SK-N-SH (cell line): ENCODE measurements at regions of chrX and their contacts with region 1.

Region 1: DNA sequence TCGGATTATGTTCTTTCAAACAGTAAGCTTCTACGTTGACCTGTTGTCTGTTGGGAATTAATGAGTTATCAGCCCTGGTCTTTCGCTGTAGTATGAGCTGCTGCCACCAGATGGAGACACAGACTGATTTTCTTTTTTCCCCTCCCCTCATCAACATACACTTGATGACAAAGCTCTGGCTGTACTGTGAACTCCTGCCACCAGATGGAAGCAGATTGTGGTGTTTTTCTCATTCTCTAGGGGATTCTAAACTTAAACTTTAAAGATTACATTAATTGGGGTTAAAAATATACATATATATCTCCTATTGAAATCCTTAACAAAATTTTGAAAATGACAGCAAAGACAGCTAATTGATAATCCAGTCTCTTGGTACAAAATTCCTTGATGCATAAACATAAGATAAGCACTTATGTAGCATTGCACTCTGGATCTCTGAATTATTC is 44.8 kb downstream of the SMS start:
- DNase-seq: peak; percentile 80
- H3K4me3 ChIP-seq: no peak overlapping the region
- H3K27ac ChIP-seq: peak overlapping the region in 1 of 2 experiments; percentile 8; a peak in 1 of 4 replicates
- H3K4me1 ChIP-seq: no peaks in the 10 kb centered on the region
- H3K27me3 ChIP-seq: no peaks in the 10 kb centered on the region
- CTCF ChIP-seq: peak; percentile 99
- EP300 ChIP-seq: no peak
- RAD21 ChIP-seq: peak; percentile 95

Region 2: GRCh38 chrX:21959362-21960105 is 25.8 kb before region 1 on chrX:
- CTCF ChIA-PET with region 1: interaction called, 16 read pairs
- POLR2A ChIA-PET with region 1: no interaction called
- DNase-seq: no peak
- H3K4me3 ChIP-seq: no peak overlapping the region
- H3K27ac ChIP-seq: peak overlapping the region in 1 of 2 experiments; percentile 9; a peak in 1 of 4 replicates
- H3K4me1 ChIP-seq: peaks cover 21 to 42% of the 10 kb centered on the region in 2 experiments; a peak in 3 of 4 replicates
- H3K27me3 ChIP-seq: no peaks in the 10 kb centered on the region
- CTCF ChIP-seq: no peak
- EP300 ChIP-seq: no peak
- RAD21 ChIP-seq: no peak

Region 3: DNA sequence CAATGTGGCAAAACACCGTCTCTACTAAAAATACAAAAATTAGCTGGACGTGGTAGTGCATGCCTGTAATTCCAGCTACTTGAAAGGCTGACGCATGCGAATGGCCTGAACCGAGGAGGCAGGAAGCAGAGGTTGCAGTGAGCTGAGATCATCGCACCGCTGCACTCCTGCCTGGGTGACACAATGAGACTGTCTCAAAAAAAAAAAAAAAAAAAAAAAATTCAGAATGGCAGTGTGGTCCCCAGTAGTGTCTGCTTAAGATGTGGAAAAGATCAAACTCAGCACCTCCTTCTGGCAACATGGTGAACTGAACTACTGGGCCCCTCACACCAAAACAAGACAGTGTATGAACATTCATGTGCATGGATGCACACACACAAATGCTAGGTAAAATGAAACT is 12.6 kb before region 1 on chrX:
- CTCF ChIA-PET with region 1: interaction called, 43 read pairs
- POLR2A ChIA-PET with region 1: no interaction called
- DNase-seq: no peak
- H3K4me3 ChIP-seq: no peak overlapping the region
- H3K27ac ChIP-seq: peak overlapping the region in 1 of 2 experiments; percentile 65; a peak in 2 of 4 replicates
- H3K4me1 ChIP-seq: peaks cover 0 to 4% of the 10 kb centered on the region in 2 experiments; a peak in 2 of 4 replicates
- H3K27me3 ChIP-seq: no peaks in the 10 kb centered on the region
- CTCF ChIP-seq: peak; percentile 55
- EP300 ChIP-seq: no peak; a peak in 1 of 4 replicates
- RAD21 ChIP-seq: no peak; the same call in 1 of the 2 replicates

Region 4: DNA sequence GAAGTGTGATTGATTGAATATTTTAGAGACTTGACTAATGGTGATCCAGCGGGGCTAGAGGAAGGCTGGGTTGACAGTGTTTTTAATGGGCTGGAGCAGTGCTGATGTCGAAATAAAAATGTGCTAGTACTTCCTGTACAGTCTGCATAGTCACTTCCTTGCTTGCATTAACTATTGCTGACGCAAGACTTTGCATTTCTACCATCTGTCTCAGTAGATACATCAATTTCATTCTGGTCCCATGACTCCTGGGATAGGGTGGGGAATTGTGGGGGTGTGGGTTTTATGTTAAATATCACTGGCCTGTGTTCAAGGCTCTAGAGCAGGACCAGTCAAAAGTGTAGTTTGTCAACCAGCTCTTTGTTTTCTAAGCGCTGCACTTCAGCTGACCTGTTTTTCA is 11.5 kb after region 1 on chrX:
- CTCF ChIA-PET with region 1: interaction called, 32 read pairs
- POLR2A ChIA-PET with region 1: no interaction called
- DNase-seq: no peak
- H3K4me3 ChIP-seq: no peak overlapping the region
- H3K27ac ChIP-seq: no peak overlapping the region
- H3K4me1 ChIP-seq: peaks cover 0 to 3% of the 10 kb centered on the region in 2 experiments; a peak in 1 of 4 replicates
- H3K27me3 ChIP-seq: no peaks in the 10 kb centered on the region
- CTCF ChIP-seq: no peak
- EP300 ChIP-seq: no peak
- RAD21 ChIP-seq: no peak

Region 5: GRCh38 chrX:22135994-22136684 is 150.8 kb after region 1 on chrX:
- CTCF ChIA-PET with region 1: interaction called, 32 read pairs
- POLR2A ChIA-PET with region 1: no interaction called
- DNase-seq: peak; percentile 30
- H3K4me3 ChIP-seq: no peak overlapping the region
- H3K27ac ChIP-seq: peak overlapping the region in 1 of 2 experiments; percentile 83; a peak in 2 of 4 replicates
- H3K4me1 ChIP-seq: peaks cover 10 to 11% of the 10 kb centered on the region in 2 experiments; a peak in 3 of 4 replicates
- H3K27me3 ChIP-seq: no peaks in the 10 kb centered on the region
- CTCF ChIP-seq: peak; percentile 88
- EP300 ChIP-seq: peak in 1 of 2 experiments; percentile 63; a peak in 1 of 4 replicates
- RAD21 ChIP-seq: peak; percentile 79

Region 6: GRCh38 chrX:22192417-22193060 is 207.2 kb after region 1 on chrX:
- CTCF ChIA-PET with region 1: interaction called, 10 read pairs
- POLR2A ChIA-PET with region 1: no interaction called
- DNase-seq: peak; percentile 47
- H3K4me3 ChIP-seq: peak overlapping the region in 1 of 2 experiments; percentile 35; a peak in 1 of 4 replicates
- H3K27ac ChIP-seq: no peak overlapping the region
- H3K4me1 ChIP-seq: no peaks in the 10 kb centered on the region
- H3K27me3 ChIP-seq: no peaks in the 10 kb centered on the region
- CTCF ChIP-seq: peak; percentile 87
- EP300 ChIP-seq: no peak
- RAD21 ChIP-seq: peak; percentile 65

Region 7: GRCh38 chrX:22748093-22748999 is 763.0 kb after region 1 on chrX:
- CTCF ChIA-PET with region 1: interaction called, 10 read pairs
- POLR2A ChIA-PET with region 1: no interaction called
- DNase-seq: peak; percentile 40
- H3K4me3 ChIP-seq: no peak overlapping the region
- H3K27ac ChIP-seq: no peak overlapping the region
- H3K4me1 ChIP-seq: no peaks in the 10 kb centered on the region
- H3K27me3 ChIP-seq: no peaks in the 10 kb centered on the region
- CTCF ChIP-seq: peak; percentile 90
- EP300 ChIP-seq: no peak
- RAD21 ChIP-seq: peak; percentile 65